ENCODE measurements at regions of chr15 and their contacts with region 1.

Region 1: GRCh38 chr15:83571820-83572707 is 81.9 kb upstream of the ADAMTSL3 start:
- DNase-seq: no peak
- ATAC-seq: no peak
- H3K4me3 Mint-ChIP-seq: no peak overlapping the region
- H3K27ac Mint-ChIP-seq: no peak overlapping the region
- H3K4me1 Mint-ChIP-seq: no peaks in the 10 kb centered on the region
- H3K27me3 Mint-ChIP-seq: no peaks in the 10 kb centered on the region
- CTCF ChIP-seq: peak; percentile 18

Region 2: GRCh38 chr15:83248151-83249029 is 323.7 kb before region 1 on chr15:
- CTCF ChIA-PET with region 1: no interaction called
- POLR2A ChIA-PET with region 1: no interaction called
- intact Hi-C with region 1: loop called (anchors 1 kb)
- DNase-seq: no peak
- ATAC-seq: no peak
- H3K4me3 Mint-ChIP-seq: no peak overlapping the region
- H3K27ac Mint-ChIP-seq: no peak overlapping the region
- H3K4me1 Mint-ChIP-seq: no peaks in the 10 kb centered on the region
- H3K27me3 Mint-ChIP-seq: peaks cover 29% of the 10 kb centered on the region
- CTCF ChIP-seq: peak; percentile 77

Region 3: DNA sequence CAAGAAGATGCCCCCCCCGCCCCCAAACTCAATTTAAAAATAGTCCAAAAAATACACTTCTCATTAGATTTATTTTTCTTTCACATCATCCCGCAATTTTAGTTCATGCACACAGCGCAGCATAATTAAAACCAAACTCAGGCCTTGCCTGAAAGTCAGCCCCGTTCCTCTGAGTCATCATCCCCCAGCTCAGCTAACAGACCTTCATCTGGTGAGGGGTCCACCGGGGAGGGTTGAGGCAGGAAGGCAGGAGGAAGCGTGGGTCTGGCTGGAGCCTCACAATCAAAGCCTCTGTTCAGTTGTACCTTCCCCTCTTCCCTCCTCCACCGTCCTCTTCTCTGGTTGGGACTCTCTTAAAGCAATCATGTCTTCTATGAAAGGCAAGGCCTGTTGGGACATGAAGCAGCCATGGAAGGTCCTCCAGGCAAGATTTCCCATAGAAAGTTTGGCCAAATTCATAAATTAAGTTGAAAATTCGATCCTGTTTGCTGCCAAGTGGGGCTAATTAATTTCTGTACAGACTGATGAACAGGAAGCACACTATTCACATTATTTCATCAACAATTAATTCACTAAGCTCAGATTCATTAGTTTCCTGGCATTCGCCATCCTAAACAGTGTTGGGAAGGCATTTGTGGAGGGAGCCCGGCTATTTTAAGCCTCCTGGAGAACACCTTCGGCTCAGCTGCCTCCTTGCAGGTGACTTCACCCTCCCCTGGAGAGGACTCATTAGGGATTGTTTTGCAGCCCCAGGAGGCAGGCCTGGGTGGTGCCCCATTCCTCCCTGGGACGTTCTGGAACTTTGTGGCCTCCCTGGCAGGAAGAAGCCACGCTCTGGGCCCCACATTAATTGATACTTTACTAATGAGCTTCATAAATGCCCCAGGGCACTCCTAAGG is 215.3 kb before region 1 on chr15:
- CTCF ChIA-PET with region 1: no interaction called
- POLR2A ChIA-PET with region 1: no interaction called
- intact Hi-C with region 1: no loop called
- DNase-seq: no peak
- ATAC-seq: no peak
- H3K4me3 Mint-ChIP-seq: no peak overlapping the region
- H3K27ac Mint-ChIP-seq: no peak overlapping the region
- H3K4me1 Mint-ChIP-seq: no peaks in the 10 kb centered on the region
- H3K27me3 Mint-ChIP-seq: peaks cover 3% of the 10 kb centered on the region
- CTCF ChIP-seq: no peak

Region 4: DNA sequence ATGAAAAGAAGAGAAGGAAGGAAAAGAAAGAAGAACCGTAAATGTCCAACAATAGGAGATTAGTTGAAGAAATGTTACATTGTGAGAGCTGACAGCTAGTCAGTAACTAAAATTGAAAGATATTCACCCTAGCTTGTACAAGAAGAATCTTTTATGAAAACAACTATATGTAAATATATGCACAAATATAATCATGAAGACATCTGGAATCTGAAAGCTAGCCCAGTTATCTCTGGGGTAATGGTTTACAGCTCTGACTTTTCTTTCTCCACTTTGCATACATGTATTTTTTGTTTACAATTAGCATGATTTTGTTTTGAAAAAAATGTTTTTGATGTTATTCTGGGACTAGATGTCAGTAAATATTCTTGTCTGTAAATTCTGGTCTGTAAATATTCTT is 44.8 kb after region 1 on chr15:
- CTCF ChIA-PET with region 1: no interaction called
- POLR2A ChIA-PET with region 1: no interaction called
- intact Hi-C with region 1: no loop called
- DNase-seq: no peak
- ATAC-seq: no peak
- H3K4me3 Mint-ChIP-seq: no peak overlapping the region
- H3K27ac Mint-ChIP-seq: no peak overlapping the region
- H3K4me1 Mint-ChIP-seq: no peaks in the 10 kb centered on the region
- H3K27me3 Mint-ChIP-seq: no peaks in the 10 kb centered on the region
- CTCF ChIP-seq: no peak

Measured in activated B cell treated with CpG ODN at 0.5 μM for 24 hours (primary cell).